Pancreas (tissue), 10 donors: ENCODE measurements at regions of chr9 and their contacts with region 1.

Region 1: GRCh38 chr9:112268413-112268812 is 65.0 kb downstream of the PTBP3 start:
- DNase-seq: no peak
- ATAC-seq: no peak
- H3K4me3 ChIP-seq: no peak overlapping the region
- H3K27ac ChIP-seq: no peak overlapping the region
- H3K4me1 ChIP-seq: peaks cover 0 to 12% (median 0%) of the 10 kb centered on the region in 3 donors
- H3K27me3 ChIP-seq: no peaks in the 10 kb centered on the region
- CTCF ChIP-seq: no peak

Region 2: DNA sequence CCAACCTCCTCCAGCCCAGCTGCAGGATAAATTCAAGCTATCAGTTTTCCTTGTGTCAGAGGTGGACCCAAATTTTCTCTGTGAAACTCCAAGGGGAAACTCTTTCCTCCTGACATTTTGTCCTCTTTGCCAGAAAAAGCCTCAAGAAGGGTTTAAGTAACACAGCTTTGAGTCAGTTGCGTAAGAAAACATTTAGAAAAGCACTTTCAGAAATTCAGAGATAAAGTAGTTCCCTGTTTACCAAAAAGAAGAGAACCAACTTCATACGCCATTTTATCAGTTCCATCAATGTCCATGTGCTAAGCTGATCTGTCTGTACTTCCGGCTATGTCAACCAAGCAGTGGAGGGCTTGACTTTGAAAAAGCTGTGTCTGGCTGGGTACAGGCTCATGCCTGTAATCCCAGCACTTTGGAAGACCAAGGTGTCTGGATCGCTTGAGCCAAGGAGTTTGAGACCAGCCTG is 73.4 kb before region 1 on chr9:
- intact Hi-C with region 1: no loop called
- DNase-seq: no peak
- ATAC-seq: no peak
- H3K4me3 ChIP-seq: no peak overlapping the region
- H3K27ac ChIP-seq: no peak overlapping the region
- H3K4me1 ChIP-seq: no peaks in the 10 kb centered on the region
- H3K27me3 ChIP-seq: no peaks in the 10 kb centered on the region
- CTCF ChIP-seq: no peak

Region 3: GRCh38 chr9:112310826-112311225 is 42.4 kb after region 1 on chr9:
- intact Hi-C with region 1: loop called in 1 of 3 experiments (anchors 5 kb)
- DNase-seq: no peak
- ATAC-seq: no peak
- H3K4me3 ChIP-seq: no peak overlapping the region
- H3K27ac ChIP-seq: no peak overlapping the region
- H3K4me1 ChIP-seq: peaks cover 0 to 5% (median 0%) of the 10 kb centered on the region in 3 donors
- H3K27me3 ChIP-seq: no peaks in the 10 kb centered on the region
- CTCF ChIP-seq: no peak